SK-MEL-5 (cell line): ENCODE measurements at regions of chr2 and their contacts with region 1.

Region 1: DNA sequence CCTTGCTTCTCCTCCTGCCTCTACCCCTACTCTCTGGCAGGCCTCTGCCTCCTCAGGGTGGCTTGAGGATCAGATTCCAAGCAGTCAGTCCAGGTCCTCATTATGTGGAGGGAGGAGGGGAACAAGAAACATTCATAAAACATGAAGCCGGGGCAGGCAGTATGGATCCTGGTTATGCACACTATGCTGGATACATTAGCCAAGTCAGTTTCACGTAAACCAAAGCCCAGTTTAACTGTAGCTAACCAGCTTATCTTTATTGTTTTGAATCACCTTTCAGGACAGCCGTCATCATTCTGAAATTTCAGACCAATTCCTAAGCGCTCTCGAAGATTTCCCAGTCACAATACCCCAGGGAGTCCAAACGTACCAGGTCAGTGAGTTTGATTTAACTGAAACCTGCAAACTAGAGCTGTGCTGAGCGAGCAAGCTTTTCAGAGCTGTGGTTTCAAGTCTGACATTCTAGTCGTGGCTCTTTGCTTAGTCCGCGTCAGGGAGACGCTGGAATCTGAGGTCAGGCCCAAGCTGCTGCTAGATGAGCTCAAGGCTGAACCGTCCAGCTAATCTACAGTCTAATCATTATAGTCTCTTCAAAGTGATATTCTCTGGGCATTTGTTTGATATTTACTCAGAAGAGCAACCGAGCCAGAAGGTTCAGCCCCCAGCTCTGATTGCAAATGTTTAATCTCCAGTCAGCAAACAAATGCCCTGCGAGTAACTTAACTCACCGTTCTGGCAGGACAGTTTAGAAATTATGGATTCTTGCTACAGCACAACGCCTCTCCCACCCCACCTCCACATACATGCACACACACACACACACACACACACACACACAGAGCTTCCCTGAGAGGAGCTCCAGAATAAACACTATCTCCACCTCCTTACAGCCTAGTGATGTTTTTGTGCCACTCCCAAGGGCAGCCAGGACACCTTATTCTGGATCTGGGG is 63.8 kb upstream of the BZW1 start:
- DNase-seq: no peak

Region 2: DNA sequence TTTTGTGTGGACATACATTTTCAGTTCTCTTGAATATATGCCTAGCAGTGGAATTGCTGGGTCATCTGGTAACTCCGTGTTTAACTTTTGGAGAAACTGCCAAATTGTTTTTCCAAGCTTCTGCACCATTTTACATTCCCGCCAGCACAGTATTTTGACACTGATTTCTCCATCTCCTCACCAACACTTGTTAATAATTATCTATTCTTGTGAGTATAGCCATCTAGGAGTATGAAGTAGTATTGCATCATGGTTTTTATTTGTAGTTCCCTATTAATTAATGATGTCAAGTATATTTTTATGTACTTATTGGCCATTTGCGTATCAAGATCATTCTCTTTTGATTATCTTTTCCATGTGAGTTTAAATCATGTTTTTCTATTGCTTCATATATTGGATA is 180.0 kb before region 1 on chr2:
- in situ Hi-C with region 1: loop called (anchors 25 kb)
- DNase-seq: no peak

Region 3: GRCh38 chr2:200864176-200864976 is 116.4 kb after region 1 on chr2 and contains the start of gene CLK1:
- in situ Hi-C with region 1: no loop called
- DNase-seq: peak; percentile 92
- total RNA-seq, gene CLK1: 66.8 and 67.0 TPM in 2 replicates